Activated T-helper 1 cell treated with anti-CD3 and anti-CD28 coated beads, Interleukin-12 subunit alpha, Interleukin-12 subunit beta, Interleukin-2, Interleukin-4 antibody, amounts not matched to agents 30 ng/mL and 10 ng/mL and 1 ng/mL, durations not matched to agents 14 hours and 24 hours and 36 hours (primary cell): ENCODE measurements at regions of chr4 and their contacts with region 1.

Region 1: DNA sequence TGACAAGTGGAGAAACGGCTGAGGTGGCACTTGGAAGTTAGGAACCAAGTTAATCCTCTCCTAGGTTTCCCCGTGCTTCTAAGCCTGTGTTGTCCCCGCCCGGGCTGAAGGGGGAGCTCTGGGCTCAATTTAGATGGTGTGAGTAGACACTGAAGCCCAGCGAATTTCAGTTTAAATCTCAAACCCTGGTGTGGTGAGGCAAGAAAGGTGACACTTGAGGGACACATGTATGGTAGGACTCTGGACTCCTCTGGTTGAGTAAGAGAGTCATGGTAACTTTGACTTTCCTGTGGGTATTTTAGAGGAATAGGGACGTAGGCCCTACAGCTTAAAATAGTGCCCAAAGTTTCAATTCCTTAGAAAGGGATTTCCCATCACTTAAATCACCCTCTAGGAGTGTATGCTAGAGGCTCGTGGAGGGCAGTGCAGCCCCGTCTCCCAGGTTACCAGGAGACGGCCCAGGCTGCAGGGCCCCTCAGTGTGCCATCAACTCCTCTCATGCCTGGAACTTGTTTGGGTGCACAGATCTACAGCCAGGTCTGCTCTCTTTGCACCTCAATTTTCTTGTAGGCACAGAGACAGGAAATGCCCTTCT is 24.0 kb downstream of the HAND2 start:
- DNase-seq: no peak
- H3K4me3 Mint-ChIP-seq: no peak overlapping the region
- H3K27ac Mint-ChIP-seq: no peak overlapping the region
- H3K4me1 Mint-ChIP-seq: peaks cover 17% of the 10 kb centered on the region
- H3K27me3 Mint-ChIP-seq: peaks cover 81% of the 10 kb centered on the region

Region 2: GRCh38 chr4:173494013-173494970 is 11.7 kb before region 1 on chr4:
- intact Hi-C with region 1: no loop called
- DNase-seq: peak; percentile 56
- H3K4me3 Mint-ChIP-seq: peak overlapping the region; percentile 87
- H3K27ac Mint-ChIP-seq: no peak overlapping the region
- H3K4me1 Mint-ChIP-seq: peaks cover 33% of the 10 kb centered on the region
- H3K27me3 Mint-ChIP-seq: peaks cover 35% of the 10 kb centered on the region

Region 3: GRCh38 chr4:173547889-173548288 is 41.9 kb after region 1 on chr4:
- intact Hi-C with region 1: no loop called
- DNase-seq: no peak
- H3K4me3 Mint-ChIP-seq: no peak overlapping the region
- H3K27ac Mint-ChIP-seq: no peak overlapping the region
- H3K4me1 Mint-ChIP-seq: no peaks in the 10 kb centered on the region
- H3K27me3 Mint-ChIP-seq: peaks cover 36% of the 10 kb centered on the region

Region 4: GRCh38 chr4:174120446-174121295 is 614.6 kb after region 1 on chr4:
- intact Hi-C with region 1: loop called (anchors 1 kb)
- DNase-seq: no peak
- H3K4me3 Mint-ChIP-seq: no peak overlapping the region
- H3K27ac Mint-ChIP-seq: no peak overlapping the region
- H3K4me1 Mint-ChIP-seq: peaks cover 5% of the 10 kb centered on the region
- H3K27me3 Mint-ChIP-seq: peaks cover 33% of the 10 kb centered on the region